Activated CD8-positive, alpha-beta T cell treated with anti-CD3 and anti-CD28 coated beads, Interleukin-2, amount 10 ng/mL, durations not matched to agents 7 days and 5 days (primary cell): ENCODE measurements at regions of chr12 and their contacts with region 1.

Region 1: DNA sequence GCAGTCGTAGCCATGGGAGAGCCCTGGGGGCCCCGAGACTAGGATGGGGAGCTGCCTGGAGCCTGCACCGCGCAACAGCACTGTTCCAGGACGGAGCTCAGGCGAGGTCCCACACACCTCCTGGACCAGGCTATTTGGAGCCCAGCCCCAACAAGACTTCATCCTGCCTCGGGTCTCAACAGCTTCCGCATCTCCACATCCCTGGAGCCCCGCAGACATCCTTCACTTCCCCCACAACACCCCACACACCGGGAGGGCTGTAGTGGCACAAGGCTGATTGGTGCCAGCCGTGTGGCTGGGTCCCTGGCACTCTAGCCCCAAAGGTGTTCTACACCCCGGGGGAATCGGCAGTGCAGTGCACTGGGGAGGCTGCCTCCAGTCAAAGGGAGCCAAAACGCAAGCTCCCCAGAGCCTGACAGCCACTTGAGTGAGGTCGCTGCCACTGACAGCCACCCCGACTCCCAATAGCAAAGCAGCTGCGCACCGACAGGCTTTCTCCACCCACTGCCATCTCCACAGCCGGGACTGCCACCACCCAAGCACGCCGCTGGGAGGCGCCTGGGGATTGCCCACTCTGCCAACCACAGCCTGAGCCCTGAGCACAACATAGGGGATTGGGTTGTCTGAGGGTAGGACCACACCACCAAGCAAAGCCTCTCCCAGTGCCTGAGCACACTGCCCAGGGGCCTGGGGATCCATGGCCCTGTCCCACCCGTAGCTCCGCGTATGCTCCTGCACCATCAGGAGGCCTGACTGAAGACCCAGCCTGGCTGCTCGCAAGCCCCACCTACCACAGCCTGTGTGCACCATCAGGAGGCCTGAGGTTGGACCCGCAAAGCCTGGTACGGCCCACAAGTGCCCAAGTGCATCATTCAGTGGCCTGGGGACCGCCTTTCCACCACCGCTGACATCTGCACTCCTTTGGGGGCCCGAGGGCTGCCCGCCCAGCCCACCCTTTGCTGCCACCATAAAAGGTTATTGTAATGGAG is 13.2 kb upstream of the KLRF1 start:
- DNase-seq: peak; percentile 95
- ATAC-seq: peak; percentile 98
- H3K4me3 Mint-ChIP-seq: peak overlapping the region; percentile 86
- H3K27ac Mint-ChIP-seq: peak overlapping the region; percentile 84
- H3K4me1 Mint-ChIP-seq: peaks cover 44% of the 10 kb centered on the region
- H3K27me3 Mint-ChIP-seq: peaks cover 4% of the 10 kb centered on the region

Region 2: GRCh38 chr12:9699898-9700605 is 114.1 kb before region 1 on chr12:
- CTCF ChIA-PET with region 1: no interaction called
- POLR2A ChIA-PET with region 1: no interaction called
- DNase-seq: no peak
- ATAC-seq: no peak
- H3K4me3 Mint-ChIP-seq: no peak overlapping the region
- H3K27ac Mint-ChIP-seq: no peak overlapping the region
- H3K4me1 Mint-ChIP-seq: peaks cover 72% of the 10 kb centered on the region
- H3K27me3 Mint-ChIP-seq: no peaks in the 10 kb centered on the region

Region 3: GRCh38 chr12:9750276-9751203 is 63.6 kb before region 1 on chr12:
- CTCF ChIA-PET with region 1: interaction called, 147 read pairs
- POLR2A ChIA-PET with region 1: interaction called, 12 read pairs
- DNase-seq: peak; percentile 75
- ATAC-seq: peak; percentile 57
- H3K4me3 Mint-ChIP-seq: peak overlapping the region; percentile 51
- H3K27ac Mint-ChIP-seq: peak overlapping the region; percentile 72
- H3K4me1 Mint-ChIP-seq: peaks cover 56% of the 10 kb centered on the region
- H3K27me3 Mint-ChIP-seq: no peaks in the 10 kb centered on the region

Region 4: GRCh38 chr12:9827209-9827888 is 13.2 kb after region 1 on chr12 and contains the start of gene KLRF1:
- CTCF ChIA-PET with region 1: interaction called, 16 read pairs
- POLR2A ChIA-PET with region 1: no interaction called
- DNase-seq: no peak
- ATAC-seq: no peak
- H3K4me3 Mint-ChIP-seq: no peak within 1 kb of the TSS
- H3K27ac Mint-ChIP-seq: no peak within 1 kb of the TSS
- H3K4me1 Mint-ChIP-seq: no peaks in the 10 kb centered on the region
- H3K27me3 Mint-ChIP-seq: peaks cover 11% of the 10 kb centered on the region
- total RNA-seq, gene KLRF1: 0.42 TPM in 1 of 2 experiments, not detected in the other

Region 5: DNA sequence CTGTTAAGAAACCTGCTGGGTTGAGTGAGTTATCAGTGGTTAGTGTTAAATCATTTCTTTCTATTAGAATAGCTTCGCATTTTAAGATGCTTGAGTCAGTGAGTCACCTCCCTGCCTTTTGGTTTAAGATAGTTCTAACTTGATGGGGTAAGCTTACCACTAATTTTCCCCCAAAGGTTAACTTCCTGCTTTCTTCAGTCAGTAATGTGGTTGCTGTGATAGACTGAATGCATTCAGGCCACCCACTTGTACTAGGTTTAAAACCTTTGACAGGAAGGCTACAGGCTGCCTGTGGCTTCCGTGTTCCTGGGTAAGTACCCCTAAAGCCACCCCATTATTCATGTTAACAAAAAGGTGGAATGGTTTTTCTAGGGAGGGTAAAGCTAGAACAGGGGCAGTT is 92.8 kb after region 1 on chr12:
- CTCF ChIA-PET with region 1: interaction called, 13 read pairs
- POLR2A ChIA-PET with region 1: interaction called, 3 read pairs
- DNase-seq: peak; percentile 70
- ATAC-seq: peak; percentile 97
- H3K4me3 Mint-ChIP-seq: peak overlapping the region; percentile 55
- H3K27ac Mint-ChIP-seq: peak overlapping the region; percentile 89
- H3K4me1 Mint-ChIP-seq: peaks cover 52% of the 10 kb centered on the region
- H3K27me3 Mint-ChIP-seq: no peaks in the 10 kb centered on the region

Region 6: GRCh38 chr12:9948606-9949296 is 134.6 kb after region 1 on chr12:
- CTCF ChIA-PET with region 1: interaction called, 16 read pairs
- POLR2A ChIA-PET with region 1: interaction called, 4 read pairs
- DNase-seq: peak; percentile 44
- ATAC-seq: peak; percentile 81
- H3K4me3 Mint-ChIP-seq: peak overlapping the region; percentile 1
- H3K27ac Mint-ChIP-seq: peak overlapping the region; percentile 80
- H3K4me1 Mint-ChIP-seq: peaks cover 60% of the 10 kb centered on the region
- H3K27me3 Mint-ChIP-seq: no peaks in the 10 kb centered on the region

Region 7: DNA sequence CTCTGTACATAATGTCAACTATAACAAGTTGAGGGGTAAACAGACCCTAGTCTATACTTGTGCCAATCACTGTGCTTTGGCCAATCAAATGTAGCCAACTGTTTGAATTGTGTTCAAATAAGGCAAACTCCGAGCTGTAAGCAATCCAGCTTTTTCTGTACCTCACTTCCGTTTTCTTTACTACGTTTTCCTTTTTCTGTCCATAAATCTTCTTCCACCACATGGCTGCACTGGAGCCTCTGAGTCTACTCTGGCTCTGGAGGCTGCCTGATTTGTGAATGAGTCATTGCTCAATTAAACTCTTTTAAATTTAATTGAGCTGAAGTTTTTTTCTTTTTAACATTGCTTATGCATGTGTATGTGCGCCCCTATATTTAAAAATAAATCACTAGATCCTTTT is 255.0 kb after region 1 on chr12:
- CTCF ChIA-PET with region 1: no interaction called
- POLR2A ChIA-PET with region 1: no interaction called
- DNase-seq: no peak
- ATAC-seq: no peak
- H3K4me3 Mint-ChIP-seq: no peak overlapping the region
- H3K27ac Mint-ChIP-seq: no peak overlapping the region
- H3K4me1 Mint-ChIP-seq: peaks cover 6% of the 10 kb centered on the region
- H3K27me3 Mint-ChIP-seq: peaks cover 40% of the 10 kb centered on the region